Thyroid gland (tissue), 4 donors: ENCODE measurements at regions of chr12 and their contacts with region 1.

Region 1: DNA sequence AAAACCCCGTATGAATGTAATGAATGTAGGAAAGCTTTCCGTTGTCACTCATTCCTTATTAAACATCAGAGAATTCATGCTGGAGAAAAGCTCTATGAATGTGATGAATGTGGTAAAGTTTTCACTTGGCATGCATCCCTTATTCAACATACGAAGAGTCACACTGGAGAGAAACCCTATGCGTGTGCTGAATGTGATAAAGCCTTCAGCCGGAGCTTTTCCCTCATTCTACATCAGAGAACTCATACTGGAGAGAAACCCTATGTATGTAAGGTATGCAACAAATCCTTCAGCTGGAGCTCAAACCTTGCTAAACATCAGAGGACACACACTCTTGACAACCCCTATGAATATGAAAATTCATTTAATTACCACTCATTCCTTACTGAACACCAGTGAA is 23.8 kb downstream of the ZNF891 start:
- DNase-seq: no peak
- H3K4me3 ChIP-seq: no peak overlapping the region
- H3K27ac ChIP-seq: no peak overlapping the region
- H3K4me1 ChIP-seq: no peaks in the 10 kb centered on the region
- H3K27me3 ChIP-seq: no peaks in the 10 kb centered on the region
- CTCF ChIP-seq: no peak
- POLR2A ChIP-seq: no peak

Region 2: DNA sequence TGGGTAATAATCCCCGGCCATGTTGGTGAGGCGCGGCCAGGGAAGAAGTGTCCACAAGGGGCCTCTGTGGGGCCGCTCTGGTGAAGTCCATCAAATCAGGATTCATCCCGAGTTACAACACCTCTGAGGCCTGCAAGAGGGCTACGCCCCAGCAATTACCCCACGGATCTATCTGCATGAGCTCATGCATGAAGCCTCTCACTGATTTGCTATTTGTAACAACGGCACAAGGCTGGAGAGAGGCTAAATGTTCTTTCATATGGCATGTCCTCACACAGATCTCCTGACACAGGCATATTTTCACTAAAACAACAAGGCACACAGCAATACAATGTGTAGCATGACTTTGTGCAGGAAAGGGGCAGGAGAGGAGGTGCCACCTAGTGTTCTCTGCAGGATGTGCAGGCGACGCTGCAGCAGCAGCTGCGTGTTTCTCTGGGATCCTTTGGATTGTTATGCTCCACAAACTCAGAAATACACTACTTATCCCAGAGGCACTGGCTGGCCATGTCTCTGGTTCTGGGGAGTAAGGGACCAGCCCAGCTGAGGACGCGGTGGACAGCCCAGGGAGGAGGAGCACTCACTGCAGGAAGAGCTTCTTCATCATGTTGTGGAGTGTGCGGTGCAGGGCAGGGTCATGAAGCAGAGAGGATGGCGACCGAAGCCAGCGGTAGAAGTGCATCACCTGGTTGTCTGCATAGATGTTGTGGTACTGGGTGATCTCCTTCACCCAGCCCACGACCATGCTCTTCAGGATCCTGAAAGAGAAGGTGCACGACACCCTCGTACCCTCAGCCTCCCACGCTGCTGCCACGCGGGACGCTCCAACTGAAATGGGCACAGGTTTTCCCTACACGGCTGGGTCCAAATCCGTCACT is 467.5 kb before region 1 on chr12:
- intact Hi-C with region 1: no loop called
- DNase-seq: peak; percentile 20 to 31
- H3K4me3 ChIP-seq: no peak overlapping the region
- H3K27ac ChIP-seq: no peak overlapping the region
- H3K4me1 ChIP-seq: no peaks in the 10 kb centered on the region
- H3K27me3 ChIP-seq: no peaks in the 10 kb centered on the region
- CTCF ChIP-seq: peak in 5 of 6 experiments; percentile 20 to 77 (median 58)
- POLR2A ChIP-seq: no peak

Region 3: DNA sequence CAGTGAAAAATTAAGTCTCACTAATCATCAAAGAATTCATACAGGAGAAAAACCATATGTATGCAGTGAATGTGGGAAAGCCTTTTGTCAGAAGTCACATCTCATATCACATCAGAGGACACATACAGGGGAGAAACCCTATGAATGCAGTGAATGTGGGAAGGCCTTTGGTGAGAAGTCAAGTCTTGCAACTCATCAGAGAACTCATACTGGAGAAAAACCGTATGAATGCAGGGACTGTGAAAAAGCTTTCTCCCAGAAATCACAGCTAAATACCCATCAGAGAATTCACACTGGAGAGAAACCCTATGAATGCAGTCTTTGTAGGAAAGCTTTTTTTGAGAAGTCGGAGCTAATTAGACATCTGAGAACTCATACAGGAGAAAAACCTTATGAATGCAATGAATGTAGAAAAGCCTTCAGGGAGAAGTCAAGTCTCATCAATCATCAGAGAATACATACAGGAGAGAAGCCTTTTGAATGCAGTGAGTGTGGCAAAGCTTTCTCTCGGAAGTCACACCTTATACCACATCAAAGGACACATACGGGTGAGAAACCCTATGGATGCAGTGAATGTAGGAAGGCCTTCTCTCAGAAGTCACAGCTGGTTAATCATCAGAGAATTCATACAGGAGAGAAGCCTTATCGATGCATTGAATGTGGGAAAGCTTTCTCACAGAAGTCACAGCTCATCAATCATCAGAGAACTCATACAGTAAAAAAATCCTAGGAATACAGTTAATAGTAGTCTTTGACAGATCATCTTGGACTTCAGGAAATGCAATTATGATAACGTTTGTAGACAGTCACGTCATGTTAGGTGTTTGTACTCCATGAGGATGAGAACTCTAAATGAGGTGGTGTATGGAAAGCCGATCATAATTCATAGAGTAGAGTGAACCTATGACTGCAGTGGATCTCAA is 47.8 kb before region 1 on chr12:
- intact Hi-C with region 1: loop called (anchors 5 kb)
- DNase-seq: no peak
- H3K4me3 ChIP-seq: no peak overlapping the region
- H3K27ac ChIP-seq: no peak overlapping the region
- H3K4me1 ChIP-seq: no peaks in the 10 kb centered on the region
- H3K27me3 ChIP-seq: no peaks in the 10 kb centered on the region
- CTCF ChIP-seq: no peak
- POLR2A ChIP-seq: no peak

Region 4: GRCh38 chr12:133156125-133156690 is 50.0 kb after region 1 on chr12:
- intact Hi-C with region 1: loop called (anchors 5 kb)
- DNase-seq: no peak
- H3K4me3 ChIP-seq: no peak overlapping the region
- H3K27ac ChIP-seq: no peak overlapping the region
- H3K4me1 ChIP-seq: no peaks in the 10 kb centered on the region
- H3K27me3 ChIP-seq: no peaks in the 10 kb centered on the region
- CTCF ChIP-seq: no peak
- POLR2A ChIP-seq: no peak